ENCODE measurements at regions of chr4 and their contacts with region 1.

Region 1: GRCh38 chr4:177309522-177310371 is at the start of gene NEIL3:
- DNase-seq: peak; percentile 98
- ATAC-seq: peak; percentile 89
- H3K4me3 Mint-ChIP-seq: peak within 1 kb of the TSS; percentile 93
- H3K27ac Mint-ChIP-seq: peak within 1 kb of the TSS; percentile 88
- H3K4me1 Mint-ChIP-seq: peaks cover 48% of the 10 kb centered on the region
- H3K27me3 Mint-ChIP-seq: no peaks in the 10 kb centered on the region
- total RNA-seq, gene NEIL3: 27.5 to 40.5 TPM

Region 2: DNA sequence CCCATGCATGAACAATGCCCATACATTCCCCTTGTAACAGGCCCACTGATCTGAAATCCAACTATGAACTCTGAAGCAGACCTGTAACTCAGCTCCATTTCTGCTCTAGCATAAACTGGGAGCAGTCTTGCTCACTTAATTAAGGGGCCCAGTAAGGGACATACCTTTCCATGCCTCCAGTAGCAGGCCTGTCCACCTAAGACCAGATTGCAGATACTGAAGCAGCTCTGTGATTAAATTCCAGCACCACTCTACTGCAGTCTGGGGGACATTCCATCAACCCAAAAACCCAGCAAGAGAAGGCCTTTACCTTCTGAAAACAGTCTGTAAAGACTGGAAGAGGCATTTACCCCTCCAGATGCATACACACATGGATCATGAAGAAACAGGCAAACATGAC is 162.1 kb before region 1 on chr4:
- CTCF ChIA-PET with region 1: no interaction called
- DNase-seq: no peak
- ATAC-seq: no peak
- H3K4me3 Mint-ChIP-seq: no peak overlapping the region
- H3K27ac Mint-ChIP-seq: no peak overlapping the region
- H3K4me1 Mint-ChIP-seq: no peaks in the 10 kb centered on the region
- H3K27me3 Mint-ChIP-seq: no peaks in the 10 kb centered on the region

Region 3: GRCh38 chr4:177190995-177191568 is 118.7 kb before region 1 on chr4:
- CTCF ChIA-PET with region 1: no interaction called
- DNase-seq: no peak
- ATAC-seq: no peak
- H3K4me3 Mint-ChIP-seq: no peak overlapping the region
- H3K27ac Mint-ChIP-seq: no peak overlapping the region
- H3K4me1 Mint-ChIP-seq: no peaks in the 10 kb centered on the region
- H3K27me3 Mint-ChIP-seq: no peaks in the 10 kb centered on the region

Region 4: GRCh38 chr4:177288335-177288734 is 21.4 kb before region 1 on chr4:
- CTCF ChIA-PET with region 1: no interaction called
- DNase-seq: no peak
- ATAC-seq: no peak
- H3K4me3 Mint-ChIP-seq: no peak overlapping the region
- H3K27ac Mint-ChIP-seq: no peak overlapping the region
- H3K4me1 Mint-ChIP-seq: no peaks in the 10 kb centered on the region
- H3K27me3 Mint-ChIP-seq: peaks cover 4% of the 10 kb centered on the region

Region 5: DNA sequence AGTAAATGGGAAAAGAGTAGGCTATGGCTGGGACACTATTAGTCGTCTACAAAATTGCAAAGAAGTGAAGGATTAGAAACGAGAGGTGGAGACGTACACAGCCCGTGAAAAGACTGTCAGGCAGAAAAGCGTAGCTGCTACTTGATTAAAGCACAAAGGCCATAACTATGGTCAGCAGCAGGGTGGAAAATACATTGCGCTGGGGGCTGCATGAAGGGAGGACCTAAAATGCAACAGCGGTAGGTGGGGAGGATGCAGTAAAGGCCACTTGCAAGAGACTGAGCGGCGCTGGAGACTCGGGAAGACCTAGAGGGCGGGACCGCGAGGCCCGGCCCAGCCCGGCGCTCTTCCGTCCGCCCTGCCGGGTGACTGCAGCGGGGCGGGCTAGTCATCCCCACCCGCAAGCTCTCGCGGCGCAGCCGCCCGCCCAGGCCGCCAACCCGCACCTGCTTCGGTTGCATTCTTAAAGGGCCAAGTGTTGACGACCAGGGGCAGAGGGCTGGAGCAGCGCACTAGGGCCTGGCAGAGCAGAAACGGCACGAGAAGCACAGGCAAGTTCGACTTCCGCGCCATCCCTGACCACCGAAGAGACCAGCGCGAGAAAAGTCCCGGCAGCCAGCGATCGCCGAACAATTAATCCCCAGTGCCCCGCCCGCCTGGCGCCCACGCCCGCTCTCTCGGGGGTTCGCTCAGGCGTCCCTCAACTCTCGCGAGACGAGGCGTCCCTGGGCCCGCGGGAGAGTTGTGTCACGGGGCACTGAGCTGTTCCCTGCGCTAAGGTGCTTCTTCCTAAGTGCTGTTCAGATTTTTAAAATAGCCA is 132.3 kb after region 1 on chr4 and contains the start of gene AGA:
- CTCF ChIA-PET with region 1: interaction called, 24 read pairs
- DNase-seq: peak; percentile 98
- ATAC-seq: peak; percentile 94
- H3K4me3 Mint-ChIP-seq: peak within 1 kb of the TSS; percentile 83
- H3K27ac Mint-ChIP-seq: peak within 1 kb of the TSS; percentile 94
- H3K4me1 Mint-ChIP-seq: peaks cover 24% of the 10 kb centered on the region
- H3K27me3 Mint-ChIP-seq: no peaks in the 10 kb centered on the region
- total RNA-seq, gene AGA: 15.6 to 18.2 TPM